Spleen (tissue), 13 donors: ENCODE measurements at regions of chr12 and their contacts with region 1.

Region 1: GRCh38 chr12:96335270-96335669 is 65.0 kb downstream of the CDK17 start:
- DNase-seq: no peak
- H3K4me3 ChIP-seq: no peak overlapping the region
- H3K27ac ChIP-seq: no peak overlapping the region
- H3K4me1 ChIP-seq: peaks cover 0 to 58% (median 10%) of the 10 kb centered on the region in 6 donors
- H3K27me3 ChIP-seq: no peaks in the 10 kb centered on the region
- CTCF ChIP-seq: no peak
- POLR2A ChIP-seq: no peak

Region 2: GRCh38 chr12:96193725-96194575 is 141.3 kb before region 1 on chr12 and contains the start of gene ELK3:
- intact Hi-C with region 1: no loop called
- DNase-seq: peak; percentile 93
- H3K4me3 ChIP-seq: peak within 1 kb of the TSS; percentile 78 to 96 (median 84)
- H3K27ac ChIP-seq: peak within 1 kb of the TSS; percentile 80 to 95 (median 90)
- H3K4me1 ChIP-seq: peaks cover 20 to 72% (median 45%) of the 10 kb centered on the region in 6 donors
- H3K27me3 ChIP-seq: no peaks in the 10 kb centered on the region
- CTCF ChIP-seq: no peak
- POLR2A ChIP-seq: peak in 1 of 3 donors; percentile 74
- total RNA-seq, gene ELK3: 44.4 to 92.7 (median 60.0) TPM

Region 3: GRCh38 chr12:96383991-96384390 is 48.7 kb after region 1 on chr12:
- intact Hi-C with region 1: loop called (anchors 10 kb)
- DNase-seq: no peak
- H3K4me3 ChIP-seq: no peak overlapping the region
- H3K27ac ChIP-seq: no peak overlapping the region
- H3K4me1 ChIP-seq: peaks cover 17 to 100% (median 67%) of the 10 kb centered on the region in 6 donors
- H3K27me3 ChIP-seq: no peaks in the 10 kb centered on the region
- CTCF ChIP-seq: no peak
- POLR2A ChIP-seq: no peak